ENCODE measurements at regions of chr16 and their contacts with region 1.

Region 1: GRCh38 chr16:66650707-66651473 is 45.7 kb downstream of the CMTM4 start:
- DNase-seq: peak; percentile 68 to 89
- H3K4me3 ChIP-seq: peak overlapping the region in 3 of 4 experiments; percentile 5 to 47 (median 27); a peak in 4 of 8 replicates
- H3K27ac ChIP-seq: no peak overlapping the region
- H3K4me1 ChIP-seq: peaks cover 0 to 5% (median 3%) of the 10 kb centered on the region in 4 experiments; a peak in 3 of 7 replicates
- H3K27me3 ChIP-seq: no peaks in the 10 kb centered on the region
- CTCF ChIP-seq: peak; percentile 80 to 98 (median 96)
- EP300 ChIP-seq: no peak
- POLR2A ChIP-seq: no peak
- RAD21 ChIP-seq: peak; percentile 53 to 69; a peak in 3 of 4 replicates

Region 2: DNA sequence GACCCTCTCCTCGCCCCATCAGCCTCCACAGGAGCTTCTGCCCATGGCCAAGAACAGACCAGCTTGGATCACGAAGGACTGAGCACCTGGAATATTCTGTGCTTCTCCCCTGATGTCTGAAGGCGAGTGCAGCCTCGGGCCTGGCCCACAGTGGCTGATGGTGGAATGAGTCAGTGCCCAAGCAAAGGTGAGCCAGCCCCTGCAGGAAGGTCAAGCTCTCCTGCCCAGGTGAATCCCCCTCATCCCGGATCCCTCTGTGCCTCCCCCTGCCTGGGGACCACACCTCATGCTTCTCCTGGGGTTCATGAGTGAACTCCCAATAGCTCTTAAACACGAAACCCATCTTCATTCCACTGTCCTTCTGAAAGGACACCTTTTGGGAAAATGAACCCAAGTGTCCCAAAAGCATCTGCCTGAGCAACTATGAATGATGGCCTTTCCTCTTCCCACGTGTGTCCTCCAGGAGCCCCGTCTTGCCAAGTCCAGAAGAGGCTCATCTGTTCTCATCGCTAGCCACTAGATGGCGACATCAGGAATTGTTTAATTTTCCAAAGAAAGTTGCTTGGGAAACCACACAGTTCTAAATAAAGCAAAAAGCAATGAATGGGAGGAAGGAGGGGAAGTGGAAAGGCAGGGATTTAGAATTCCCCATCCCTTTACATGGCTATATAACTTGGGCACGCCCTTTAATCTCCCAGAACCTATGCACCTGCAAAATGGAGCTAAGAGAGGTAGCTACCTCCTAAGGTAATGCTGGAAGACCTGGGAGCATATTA is 293.5 kb before region 1 on chr16:
- CTCF ChIA-PET with region 1: no interaction called
- POLR2A ChIA-PET with region 1: no interaction called
- DNase-seq: peak in 1 of 2 experiments; percentile 27
- H3K4me3 ChIP-seq: no peak overlapping the region
- H3K27ac ChIP-seq: no peak overlapping the region
- H3K4me1 ChIP-seq: peaks cover 0 to 8% (median 1%) of the 10 kb centered on the region in 4 experiments; a peak in 3 of 7 replicates
- H3K27me3 ChIP-seq: peaks cover 0 to 3% (median 0%) of the 10 kb centered on the region in 4 experiments; a peak in 1 of 7 replicates
- CTCF ChIP-seq: peak; percentile 42 to 76 (median 72)
- EP300 ChIP-seq: no peak
- POLR2A ChIP-seq: no peak
- RAD21 ChIP-seq: peak; percentile 44 to 56

Region 3: DNA sequence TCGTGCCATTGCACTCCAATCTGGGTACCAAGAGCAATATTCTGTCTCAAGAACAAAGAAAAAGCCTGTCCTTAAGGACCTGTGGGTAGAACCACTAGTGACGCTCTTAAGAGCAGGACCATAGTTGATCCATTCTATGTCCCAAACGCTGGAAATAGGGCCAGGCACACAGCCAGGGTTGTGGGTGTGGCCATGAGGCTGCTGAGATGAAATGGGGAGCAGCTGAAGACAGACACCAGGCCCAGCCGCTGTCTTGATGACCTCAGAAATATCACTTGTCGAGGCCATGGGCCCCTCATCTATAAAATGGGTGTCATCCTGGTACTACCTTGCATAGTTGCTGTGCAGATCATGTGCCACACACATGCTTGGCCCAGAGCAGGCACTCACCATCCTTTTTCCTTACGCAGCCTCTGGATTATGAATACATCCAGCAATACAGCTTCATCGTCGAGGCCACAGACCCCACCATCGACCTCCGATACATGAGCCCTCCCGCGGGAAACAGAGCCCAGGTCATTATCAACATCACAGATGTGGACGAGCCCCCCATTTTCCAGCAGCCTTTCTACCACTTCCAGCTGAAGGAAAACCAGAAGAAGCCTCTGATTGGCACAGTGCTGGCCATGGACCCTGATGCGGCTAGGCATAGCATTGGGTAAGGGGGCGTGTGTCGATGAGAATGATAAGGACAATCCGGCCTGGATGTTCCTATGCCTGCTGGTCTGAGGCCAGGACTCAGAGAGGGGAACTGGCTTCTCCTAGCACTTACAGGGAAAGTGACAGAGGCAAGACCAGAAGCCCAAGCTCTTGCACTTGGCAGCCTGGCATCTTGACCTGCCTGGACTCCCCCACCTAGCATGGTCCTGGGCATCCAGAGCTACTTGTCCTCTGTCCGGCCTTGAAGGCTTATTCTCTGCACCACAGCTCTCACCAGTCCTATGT is 258.9 kb before region 1 on chr16:
- CTCF ChIA-PET with region 1: no interaction called
- POLR2A ChIA-PET with region 1: no interaction called
- DNase-seq: no peak
- H3K4me3 ChIP-seq: no peak overlapping the region
- H3K27ac ChIP-seq: no peak overlapping the region
- H3K4me1 ChIP-seq: no peaks in the 10 kb centered on the region
- H3K27me3 ChIP-seq: no peaks in the 10 kb centered on the region
- CTCF ChIP-seq: no peak
- EP300 ChIP-seq: no peak
- POLR2A ChIP-seq: no peak
- RAD21 ChIP-seq: no peak

Region 4: DNA sequence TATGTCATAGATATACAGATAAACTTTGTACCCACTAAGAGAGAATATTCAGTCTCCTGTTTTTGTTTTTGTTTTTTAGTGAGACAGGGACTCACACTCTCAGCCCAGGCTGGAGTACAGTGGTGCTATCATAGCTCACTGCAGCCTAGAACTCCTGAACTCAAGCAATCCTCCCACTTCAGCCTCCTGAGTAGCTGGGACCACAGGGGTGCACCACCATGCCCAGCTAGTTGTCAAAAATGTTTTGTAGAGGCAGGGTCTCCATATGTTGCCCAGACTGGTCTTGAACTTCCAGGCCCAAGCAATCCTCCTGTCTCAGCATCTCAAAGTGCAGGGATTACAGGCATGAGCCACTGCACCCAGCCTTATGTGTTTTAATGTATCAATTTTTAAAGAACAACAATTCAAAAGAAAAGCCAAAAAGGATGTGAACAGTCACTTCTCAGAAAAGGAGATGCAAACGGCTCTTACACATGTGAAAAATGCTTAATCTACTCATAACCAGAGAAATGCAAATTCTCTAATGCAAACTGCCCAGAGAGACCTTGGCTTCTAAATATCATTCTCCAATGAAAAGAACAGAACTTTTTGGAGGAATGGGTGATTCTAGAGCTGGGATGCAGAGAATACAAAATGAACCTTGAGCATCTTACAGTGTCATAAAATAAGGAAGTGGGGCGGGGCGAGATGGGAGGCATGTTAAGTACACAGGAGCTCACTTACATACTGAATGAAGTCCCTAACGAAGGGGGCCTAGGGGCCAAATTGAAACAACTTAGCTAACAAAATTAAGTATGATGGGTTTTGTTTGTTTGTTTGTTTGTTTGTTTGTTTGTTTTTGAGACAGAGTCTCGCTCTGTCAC is 53.7 kb before region 1 on chr16:
- CTCF ChIA-PET with region 1: no interaction called
- POLR2A ChIA-PET with region 1: no interaction called
- DNase-seq: no peak
- H3K4me3 ChIP-seq: no peak overlapping the region
- H3K27ac ChIP-seq: no peak overlapping the region
- H3K4me1 ChIP-seq: no peaks in the 10 kb centered on the region
- H3K27me3 ChIP-seq: no peaks in the 10 kb centered on the region
- CTCF ChIP-seq: no peak
- EP300 ChIP-seq: no peak
- POLR2A ChIP-seq: no peak
- RAD21 ChIP-seq: no peak

Region 5: GRCh38 chr16:66618588-66619375 is 32.1 kb before region 1 on chr16:
- CTCF ChIA-PET with region 1: interaction called, 17 read pairs
- POLR2A ChIA-PET with region 1: interaction called, 9 read pairs
- DNase-seq: no peak
- H3K4me3 ChIP-seq: no peak overlapping the region
- H3K27ac ChIP-seq: no peak overlapping the region
- H3K4me1 ChIP-seq: peaks cover 3 to 14% (median 7%) of the 10 kb centered on the region in 4 experiments
- H3K27me3 ChIP-seq: no peaks in the 10 kb centered on the region
- CTCF ChIP-seq: no peak
- EP300 ChIP-seq: no peak
- POLR2A ChIP-seq: no peak
- RAD21 ChIP-seq: no peak

Region 6: DNA sequence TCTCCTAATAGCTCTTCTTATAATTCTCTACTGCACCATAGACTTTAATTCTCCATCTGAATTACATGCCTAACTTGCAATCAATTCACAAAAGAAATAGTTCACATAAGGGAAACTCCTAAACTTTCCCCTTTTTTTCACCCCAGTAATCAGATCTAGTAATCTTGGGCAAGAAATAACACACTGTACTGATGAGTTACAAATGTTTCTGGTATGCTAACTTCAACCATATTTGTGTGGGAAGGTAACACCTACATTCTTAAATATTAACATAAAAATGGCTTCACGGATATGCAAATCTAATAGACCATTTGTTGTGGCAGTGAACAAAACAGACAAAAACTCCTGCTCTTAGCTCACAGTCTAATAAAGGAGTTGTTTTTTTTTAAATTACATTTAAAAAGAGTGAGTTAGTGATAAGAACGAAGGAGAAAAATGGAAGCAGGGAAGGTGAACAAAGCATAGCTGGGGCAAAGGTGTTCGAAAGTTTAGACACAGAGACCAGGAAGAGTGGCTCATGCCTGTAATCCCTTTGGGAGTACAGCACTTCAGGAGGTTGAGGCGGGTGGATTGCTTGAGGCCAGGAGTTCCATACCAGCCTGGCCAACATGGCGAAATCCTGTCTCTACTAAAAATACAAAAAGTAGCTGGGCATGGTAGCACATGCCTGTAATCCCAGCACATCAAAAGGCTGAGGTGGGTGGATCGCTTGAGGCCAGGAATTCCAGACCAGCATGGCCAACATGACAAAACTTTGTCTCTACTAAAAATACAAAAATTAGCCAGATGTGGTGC is 11.6 kb before region 1 on chr16:
- CTCF ChIA-PET with region 1: interaction called, 42 read pairs
- POLR2A ChIA-PET with region 1: interaction called, 4 read pairs
- DNase-seq: no peak
- H3K4me3 ChIP-seq: no peak overlapping the region
- H3K27ac ChIP-seq: no peak overlapping the region
- H3K4me1 ChIP-seq: peaks cover 0 to 5% (median 2%) of the 10 kb centered on the region in 4 experiments; a peak in 2 of 7 replicates
- H3K27me3 ChIP-seq: no peaks in the 10 kb centered on the region
- CTCF ChIP-seq: no peak
- EP300 ChIP-seq: no peak
- POLR2A ChIP-seq: no peak
- RAD21 ChIP-seq: no peak

Region 7: GRCh38 chr16:66668777-66669444 is 18.0 kb after region 1 on chr16:
- CTCF ChIA-PET with region 1: interaction called, 58 read pairs
- POLR2A ChIA-PET with region 1: interaction called, 4 read pairs
- DNase-seq: no peak
- H3K4me3 ChIP-seq: no peak overlapping the region
- H3K27ac ChIP-seq: no peak overlapping the region
- H3K4me1 ChIP-seq: no peaks in the 10 kb centered on the region
- H3K27me3 ChIP-seq: no peaks in the 10 kb centered on the region
- CTCF ChIP-seq: no peak
- EP300 ChIP-seq: no peak
- POLR2A ChIP-seq: no peak
- RAD21 ChIP-seq: no peak

Region 8: DNA sequence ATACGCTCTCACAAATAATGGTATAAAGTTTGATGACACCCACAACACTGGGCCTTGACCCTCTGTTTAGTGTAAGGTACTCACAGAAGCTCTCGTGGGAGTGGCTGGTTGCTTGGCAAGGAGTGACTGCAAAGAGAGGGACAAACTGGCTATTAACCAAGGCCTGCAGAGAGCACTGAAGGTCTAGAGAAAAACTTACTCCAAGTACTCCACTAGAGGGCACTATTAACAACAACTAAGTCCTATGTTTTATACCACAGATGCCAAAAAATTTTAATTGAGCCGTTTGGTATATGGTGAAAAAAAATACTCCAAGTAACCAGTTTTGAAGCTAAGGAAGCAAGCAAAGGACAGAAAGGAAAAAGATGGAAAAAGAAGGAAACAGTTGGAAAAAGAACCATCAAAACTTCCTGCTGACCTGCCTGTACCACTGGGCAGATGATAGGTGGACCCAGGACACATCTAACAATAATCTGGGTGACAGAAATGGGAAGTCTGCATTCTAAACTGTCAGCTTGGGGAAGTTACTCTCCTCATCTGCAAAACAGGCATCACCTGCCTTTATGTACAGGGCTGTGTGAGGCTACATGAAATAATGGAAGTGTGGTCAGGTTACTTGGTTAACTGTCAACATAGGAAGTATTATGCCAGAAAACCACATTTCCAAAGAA is 77.4 kb after region 1 on chr16:
- CTCF ChIA-PET with region 1: interaction called, 11 read pairs
- POLR2A ChIA-PET with region 1: no interaction called
- DNase-seq: no peak
- H3K4me3 ChIP-seq: no peak overlapping the region
- H3K27ac ChIP-seq: no peak overlapping the region; the same call in 1 of the 2 replicates
- H3K4me1 ChIP-seq: peaks cover 0 to 6% (median 5%) of the 10 kb centered on the region in 4 experiments; a peak in 6 of 7 replicates
- H3K27me3 ChIP-seq: no peaks in the 10 kb centered on the region
- CTCF ChIP-seq: peak in 2 of 3 experiments; percentile 52 to 58; a peak in 3 of 4 replicates
- EP300 ChIP-seq: no peak
- POLR2A ChIP-seq: no peak
- RAD21 ChIP-seq: peak; percentile 37 to 50

Measured in H1 (cell line).